SK-N-SH (cell line): ENCODE measurements at regions of chr1 and their contacts with region 1.

Region 1: DNA sequence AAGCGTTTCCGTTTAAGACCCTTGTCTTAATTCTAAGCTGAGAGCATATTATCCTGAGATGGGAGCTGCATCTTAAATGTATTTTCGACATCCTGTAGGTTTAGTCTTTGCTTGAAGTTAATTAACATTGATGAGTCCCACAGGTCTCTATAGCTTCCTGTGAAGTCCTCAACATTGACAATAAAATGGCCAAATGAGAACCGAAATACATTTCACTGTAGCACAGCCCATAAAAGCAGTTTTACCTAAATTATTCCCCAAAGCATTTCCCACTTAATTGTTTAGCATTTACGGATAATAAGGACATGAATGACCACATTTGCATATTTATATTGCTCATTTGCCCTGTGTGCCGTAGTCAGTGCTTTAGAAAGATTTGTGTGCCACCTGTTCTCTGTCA is 116.4 kb downstream of the CRB1 start:
- DNase-seq: no peak
- H3K4me3 ChIP-seq: no peak overlapping the region
- H3K27ac ChIP-seq: no peak overlapping the region
- H3K4me1 ChIP-seq: no peaks in the 10 kb centered on the region
- H3K27me3 ChIP-seq: no peaks in the 10 kb centered on the region
- CTCF ChIP-seq: no peak
- EP300 ChIP-seq: no peak
- RAD21 ChIP-seq: no peak

Region 2: DNA sequence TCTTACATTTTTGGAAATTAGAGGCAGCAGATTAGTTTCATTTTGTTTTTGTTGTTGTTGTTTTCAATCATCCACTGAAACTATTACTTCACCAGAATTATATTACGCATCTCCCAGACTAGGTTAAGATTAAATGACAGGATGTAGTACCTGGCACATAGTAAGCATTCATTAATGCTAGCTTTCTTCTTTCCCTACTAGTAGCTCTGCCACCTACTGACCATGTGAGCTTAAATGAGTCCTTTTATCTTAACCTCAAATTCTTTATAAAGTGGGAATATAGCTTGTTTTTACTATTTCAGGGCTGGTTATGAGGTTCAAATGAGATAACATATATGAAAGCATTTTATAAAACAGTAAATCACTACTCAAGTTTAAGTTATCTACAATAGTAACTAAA is 227.8 kb before region 1 on chr1:
- CTCF ChIA-PET with region 1: no interaction called
- POLR2A ChIA-PET with region 1: no interaction called
- DNase-seq: no peak
- H3K4me3 ChIP-seq: no peak overlapping the region
- H3K27ac ChIP-seq: no peak overlapping the region
- H3K4me1 ChIP-seq: no peaks in the 10 kb centered on the region; a peak in 1 of 4 replicates
- H3K27me3 ChIP-seq: no peaks in the 10 kb centered on the region
- CTCF ChIP-seq: peak; percentile 22; the same call in 1 of the 2 replicates
- EP300 ChIP-seq: no peak
- RAD21 ChIP-seq: no peak

Region 3: GRCh38 chr1:197399755-197400527 is 15.5 kb after region 1 on chr1:
- CTCF ChIA-PET with region 1: interaction called, 13 read pairs
- POLR2A ChIA-PET with region 1: no interaction called
- DNase-seq: peak; percentile 46
- H3K4me3 ChIP-seq: peak overlapping the region in 1 of 2 experiments; percentile 36; a peak in 1 of 4 replicates
- H3K27ac ChIP-seq: no peak overlapping the region
- H3K4me1 ChIP-seq: no peaks in the 10 kb centered on the region
- H3K27me3 ChIP-seq: no peaks in the 10 kb centered on the region
- CTCF ChIP-seq: peak; percentile 70
- EP300 ChIP-seq: no peak
- RAD21 ChIP-seq: peak; percentile 71